ENCODE measurements at regions of chr1 and their contacts with region 1.

Region 1: DNA sequence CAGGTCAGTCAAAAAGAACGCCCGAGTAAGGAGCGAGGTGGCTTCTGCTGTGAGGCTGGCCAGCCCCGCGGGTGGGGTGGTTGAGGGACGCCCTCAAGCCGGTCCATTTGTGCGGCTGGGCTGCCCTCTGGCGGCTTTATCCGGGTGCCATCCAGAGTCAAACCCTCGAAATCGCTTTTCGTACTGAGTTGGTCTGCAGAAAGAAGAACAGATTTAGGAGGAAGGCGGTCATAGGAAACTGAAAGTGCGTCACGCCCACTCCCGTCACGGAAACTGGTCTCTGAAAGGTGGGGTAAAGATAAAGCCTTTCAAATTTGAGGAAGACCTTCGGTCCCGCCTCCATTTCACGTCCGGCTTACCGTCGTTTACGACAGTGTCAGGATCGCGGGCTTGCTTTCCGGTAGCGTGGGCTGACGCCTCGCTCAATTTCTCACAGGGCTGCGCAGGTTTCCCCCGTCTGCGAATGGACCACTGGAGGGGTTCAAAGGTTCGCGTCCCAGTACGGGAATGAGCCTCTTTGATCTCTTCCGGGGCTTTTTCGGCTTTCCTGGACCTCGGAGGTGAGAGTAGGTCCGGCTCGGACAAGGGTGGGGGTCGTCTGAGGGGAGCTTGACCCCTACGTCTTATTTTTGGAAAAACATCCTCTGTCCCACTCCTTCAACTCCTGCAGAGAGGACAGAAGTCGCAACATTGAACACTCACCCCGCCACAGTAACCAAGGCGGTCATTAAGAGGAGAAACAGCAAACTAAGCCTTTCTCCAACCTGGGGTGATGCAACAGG is at the start of gene HAX1:
- DNase-seq: peak; percentile 100
- ATAC-seq: peak; percentile 96
- H3K4me3 ChIP-seq: peak within 1 kb of the TSS; percentile 99
- H3K27ac ChIP-seq: peak within 1 kb of the TSS; percentile 89
- H3K4me1 ChIP-seq: peaks cover 10% of the 10 kb centered on the region
- H3K27me3 ChIP-seq: no peaks in the 10 kb centered on the region
- CTCF ChIP-seq: peak; percentile 76 to 93 (median 84); a peak in 5 of 6 replicates
- EP300 ChIP-seq: peak in 1 of 2 experiments; percentile 64; a peak in 2 of 4 replicates
- POLR2A ChIP-seq: peak; percentile 86
- RAD21 ChIP-seq: peak; percentile 88
- polyA plus RNA-seq, gene HAX1: 249 to 288 TPM

Region 2: DNA sequence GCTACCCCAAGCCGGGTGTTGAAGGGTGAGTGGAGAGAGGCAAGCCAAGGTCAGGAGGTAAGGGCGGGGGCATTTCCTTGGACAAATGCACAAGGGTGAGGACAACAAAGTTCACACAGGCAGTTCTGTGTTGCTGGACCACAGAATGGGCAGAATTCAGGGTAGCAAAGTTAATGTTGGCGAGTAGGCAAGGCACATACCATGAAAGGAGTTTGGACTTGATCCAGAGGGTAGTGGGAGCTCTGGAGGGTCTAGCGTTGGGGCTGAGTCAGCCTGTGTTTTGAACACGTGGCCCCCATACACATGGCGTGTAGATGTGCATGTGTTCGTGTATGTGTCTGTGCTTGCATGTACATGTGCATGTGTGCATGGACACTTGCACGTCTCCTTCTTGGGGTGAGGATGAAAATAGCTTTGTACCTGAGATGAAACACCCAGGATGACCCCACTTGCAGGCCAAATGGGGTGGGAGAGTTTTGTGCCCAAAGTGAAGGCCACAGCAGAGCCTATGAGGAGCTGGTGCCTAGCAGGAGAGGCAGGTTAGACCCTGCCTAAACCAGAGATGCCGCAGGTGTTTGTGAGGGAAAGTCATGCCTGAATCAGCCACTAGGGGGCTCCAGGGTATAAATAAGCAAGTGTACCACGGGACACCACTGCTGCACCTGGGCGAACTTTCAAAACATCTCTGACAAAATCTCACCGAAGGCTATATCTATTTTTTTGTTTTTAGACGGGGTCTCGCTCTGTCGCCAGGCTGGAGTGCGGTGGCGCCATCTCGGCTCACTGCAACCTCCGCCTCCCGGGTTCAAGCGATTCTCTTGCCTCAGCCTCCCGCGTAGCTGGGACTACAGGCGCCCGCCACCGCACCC is 475.4 kb before region 1 on chr1:
- CTCF ChIA-PET with region 1: interaction called, 4 read pairs
- POLR2A ChIA-PET with region 1: no interaction called
- RAD21 ChIA-PET with region 1: no interaction called
- SMC1A ChIA-PET with region 1: no interaction called
- in situ Hi-C with region 1: no loop called
- intact Hi-C with region 1: loop called (anchors 5 kb)
- DNase-seq: no peak
- ATAC-seq: peak; percentile 93
- H3K4me3 ChIP-seq: no peak overlapping the region
- H3K27ac ChIP-seq: no peak overlapping the region
- H3K4me1 ChIP-seq: peaks cover 6% of the 10 kb centered on the region
- H3K27me3 ChIP-seq: no peaks in the 10 kb centered on the region
- CTCF ChIP-seq: peak; percentile 81 to 90 (median 86)
- EP300 ChIP-seq: no peak
- POLR2A ChIP-seq: no peak
- RAD21 ChIP-seq: peak; percentile 88

Region 3: DNA sequence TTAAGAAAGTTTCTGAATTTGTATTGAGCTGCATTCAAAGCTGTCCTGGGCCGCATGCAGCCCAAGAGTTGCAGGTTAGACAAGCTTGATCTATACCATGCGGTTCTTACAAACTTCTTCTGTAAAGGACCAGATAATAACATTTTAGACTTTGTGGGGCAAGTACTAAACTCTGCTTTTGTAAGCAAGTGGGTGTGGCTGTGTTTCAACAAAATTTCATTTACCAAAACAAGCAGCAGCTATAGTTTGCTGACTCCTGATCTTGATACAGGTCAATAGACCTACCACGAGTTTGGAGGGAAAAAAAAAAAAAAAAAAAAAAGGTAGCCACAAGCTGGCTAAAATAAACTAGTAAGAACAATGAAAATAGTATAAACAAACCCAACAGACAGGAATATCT is 397.0 kb before region 1 on chr1:
- CTCF ChIA-PET with region 1: no interaction called
- POLR2A ChIA-PET with region 1: interaction called, 11 read pairs
- RAD21 ChIA-PET with region 1: no interaction called
- SMC1A ChIA-PET with region 1: no interaction called
- in situ Hi-C with region 1: no loop called
- intact Hi-C with region 1: no loop called
- DNase-seq: no peak
- ATAC-seq: no peak
- H3K4me3 ChIP-seq: no peak overlapping the region
- H3K27ac ChIP-seq: no peak overlapping the region
- H3K4me1 ChIP-seq: no peaks in the 10 kb centered on the region
- H3K27me3 ChIP-seq: no peaks in the 10 kb centered on the region
- CTCF ChIP-seq: no peak
- EP300 ChIP-seq: no peak
- POLR2A ChIP-seq: no peak
- RAD21 ChIP-seq: no peak

Region 4: DNA sequence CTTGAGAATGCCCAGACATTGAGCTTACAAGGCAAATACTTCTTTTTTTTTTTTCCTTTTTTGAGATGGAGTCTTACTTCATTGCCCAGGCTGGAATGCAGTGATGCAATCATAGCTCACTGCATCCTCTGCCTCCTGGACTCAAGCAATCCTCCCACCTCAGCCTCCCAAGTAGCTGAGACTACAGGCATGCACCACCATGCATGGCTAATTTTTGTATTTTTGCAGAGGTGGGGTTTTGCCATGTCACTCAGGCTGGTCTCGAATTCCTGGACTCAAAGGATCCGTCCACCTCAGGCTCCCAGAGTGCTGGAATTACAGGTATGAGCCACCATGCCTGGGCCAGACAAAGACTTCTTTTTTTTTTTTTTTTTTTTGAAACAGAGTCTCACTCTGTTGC is 196.7 kb before region 1 on chr1:
- CTCF ChIA-PET with region 1: no interaction called
- POLR2A ChIA-PET with region 1: interaction called, 11 read pairs
- RAD21 ChIA-PET with region 1: no interaction called
- SMC1A ChIA-PET with region 1: no interaction called
- in situ Hi-C with region 1: no loop called
- intact Hi-C with region 1: no loop called
- DNase-seq: no peak
- ATAC-seq: no peak
- H3K4me3 ChIP-seq: no peak overlapping the region
- H3K27ac ChIP-seq: no peak overlapping the region
- H3K4me1 ChIP-seq: no peaks in the 10 kb centered on the region
- H3K27me3 ChIP-seq: no peaks in the 10 kb centered on the region
- CTCF ChIP-seq: no peak
- EP300 ChIP-seq: no peak
- POLR2A ChIP-seq: no peak
- RAD21 ChIP-seq: no peak

Region 5: GRCh38 chr1:154183045-154183915 is 89.1 kb before region 1 on chr1:
- CTCF ChIA-PET with region 1: interaction called, 7 read pairs
- POLR2A ChIA-PET with region 1: interaction called, 3 read pairs
- RAD21 ChIA-PET with region 1: interaction called, 5 read pairs
- SMC1A ChIA-PET with region 1: interaction called, 6 read pairs
- in situ Hi-C with region 1: no loop called
- intact Hi-C with region 1: loop called (anchors 1 kb)
- DNase-seq: peak; percentile 73
- ATAC-seq: peak; percentile 81
- H3K4me3 ChIP-seq: peak overlapping the region; percentile 99
- H3K27ac ChIP-seq: peak overlapping the region; percentile 94
- H3K4me1 ChIP-seq: peaks cover 14% of the 10 kb centered on the region
- H3K27me3 ChIP-seq: no peaks in the 10 kb centered on the region
- CTCF ChIP-seq: no peak
- EP300 ChIP-seq: no peak
- POLR2A ChIP-seq: peak; percentile 98
- RAD21 ChIP-seq: no peak

Region 6: GRCh38 chr1:154198756-154199562 is 73.4 kb before region 1 on chr1:
- CTCF ChIA-PET with region 1: interaction called, 54 read pairs
- POLR2A ChIA-PET with region 1: interaction called, 7 read pairs
- RAD21 ChIA-PET with region 1: interaction called, 16 read pairs
- SMC1A ChIA-PET with region 1: interaction called, 48 read pairs
- in situ Hi-C with region 1: no loop called
- intact Hi-C with region 1: loop called (anchors 1 kb)
- DNase-seq: no peak
- ATAC-seq: peak; percentile 87
- H3K4me3 ChIP-seq: no peak overlapping the region
- H3K27ac ChIP-seq: no peak overlapping the region
- H3K4me1 ChIP-seq: no peaks in the 10 kb centered on the region
- H3K27me3 ChIP-seq: no peaks in the 10 kb centered on the region; a peak in 1 of 4 replicates
- CTCF ChIP-seq: peak; percentile 61 to 71 (median 67)
- EP300 ChIP-seq: no peak
- POLR2A ChIP-seq: no peak
- RAD21 ChIP-seq: peak; percentile 76

Region 7: DNA sequence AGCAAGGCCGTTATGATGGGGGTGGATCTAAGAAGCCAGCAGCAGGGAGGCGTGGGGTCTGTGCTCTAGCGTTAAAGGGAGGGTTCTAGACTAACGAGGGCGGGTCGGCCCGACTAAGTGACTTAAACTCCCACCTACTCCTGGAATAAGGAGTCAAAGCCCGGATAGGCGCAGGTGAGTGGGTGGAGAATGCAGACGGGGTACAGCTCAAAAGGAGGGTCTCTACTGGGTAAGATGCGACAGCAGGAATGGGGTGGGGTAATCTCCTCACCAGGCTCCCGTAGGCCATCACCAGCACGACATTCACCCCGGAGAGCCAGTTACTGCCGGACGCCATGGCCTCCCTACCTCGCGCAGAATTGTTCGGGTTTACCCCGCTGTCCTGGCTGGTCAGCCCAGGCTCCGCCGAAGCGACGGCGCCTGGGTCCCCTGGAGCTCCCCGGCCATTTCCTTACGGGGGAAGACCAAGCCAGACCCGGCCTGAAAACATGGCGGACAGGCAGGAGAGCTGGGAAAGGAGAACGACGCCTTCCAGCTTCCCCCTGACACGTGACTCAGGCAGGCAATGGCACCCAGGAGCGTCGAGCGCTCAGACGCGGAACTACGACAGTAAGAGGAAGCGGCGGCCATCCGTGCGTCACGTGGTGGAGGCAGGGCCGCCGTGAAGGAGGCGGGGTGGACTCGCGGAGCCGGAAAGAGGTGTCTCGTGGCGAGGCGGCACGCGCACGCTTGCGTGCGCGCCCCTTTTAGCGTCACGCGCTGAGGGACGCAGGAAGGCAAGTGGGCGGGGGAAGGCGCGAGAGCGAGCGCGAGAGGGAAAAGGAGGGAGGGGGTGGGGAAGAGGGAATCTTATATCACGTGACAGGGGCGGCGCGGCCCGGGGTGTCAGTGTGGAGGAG is 52.1 kb before region 1 on chr1 and contains the start of gene UBAP2L:
- CTCF ChIA-PET with region 1: interaction called, 5 read pairs
- POLR2A ChIA-PET with region 1: interaction called, 13 read pairs
- RAD21 ChIA-PET with region 1: interaction called, 12 read pairs
- SMC1A ChIA-PET with region 1: interaction called, 8 read pairs
- in situ Hi-C with region 1: no loop called
- intact Hi-C with region 1: no loop called
- DNase-seq: peak; percentile 98
- ATAC-seq: peak; percentile 90
- H3K4me3 ChIP-seq: peak within 1 kb of the TSS; percentile 99
- H3K27ac ChIP-seq: peak within 1 kb of the TSS; percentile 99
- H3K4me1 ChIP-seq: peaks cover 21% of the 10 kb centered on the region
- H3K27me3 ChIP-seq: no peaks in the 10 kb centered on the region
- CTCF ChIP-seq: no peak
- EP300 ChIP-seq: no peak
- POLR2A ChIP-seq: peak; percentile 97
- RAD21 ChIP-seq: no peak
- polyA plus RNA-seq, gene UBAP2L: 49.9 to 53.3 TPM

Region 8: GRCh38 chr1:154847891-154848290 is 575.5 kb after region 1 on chr1:
- CTCF ChIA-PET with region 1: no interaction called
- POLR2A ChIA-PET with region 1: no interaction called
- RAD21 ChIA-PET with region 1: no interaction called
- SMC1A ChIA-PET with region 1: no interaction called
- in situ Hi-C with region 1: no loop called
- intact Hi-C with region 1: no loop called
- DNase-seq: no peak
- ATAC-seq: no peak
- H3K4me3 ChIP-seq: no peak overlapping the region
- H3K27ac ChIP-seq: no peak overlapping the region
- H3K4me1 ChIP-seq: peaks cover 52% of the 10 kb centered on the region
- H3K27me3 ChIP-seq: no peaks in the 10 kb centered on the region
- CTCF ChIP-seq: no peak
- EP300 ChIP-seq: no peak
- POLR2A ChIP-seq: no peak
- RAD21 ChIP-seq: no peak